Activated naive CD4-positive, alpha-beta T cell treated with anti-CD3 and anti-CD28 coated beads for 36 hours (primary cell): ENCODE measurements at regions of chr11 and their contacts with region 1.

Region 1: GRCh38 chr11:125111343-125112207 is at the start of gene TMEM218:
- DNase-seq: peak; percentile 98
- H3K4me3 Mint-ChIP-seq: peak within 1 kb of the TSS; percentile 84
- H3K27ac Mint-ChIP-seq: peak within 1 kb of the TSS; percentile 79
- H3K4me1 Mint-ChIP-seq: peaks cover 16% of the 10 kb centered on the region
- H3K27me3 Mint-ChIP-seq: no peaks in the 10 kb centered on the region
- total RNA-seq, gene TMEM218: 11.5 to 12.6 TPM

Region 2: DNA sequence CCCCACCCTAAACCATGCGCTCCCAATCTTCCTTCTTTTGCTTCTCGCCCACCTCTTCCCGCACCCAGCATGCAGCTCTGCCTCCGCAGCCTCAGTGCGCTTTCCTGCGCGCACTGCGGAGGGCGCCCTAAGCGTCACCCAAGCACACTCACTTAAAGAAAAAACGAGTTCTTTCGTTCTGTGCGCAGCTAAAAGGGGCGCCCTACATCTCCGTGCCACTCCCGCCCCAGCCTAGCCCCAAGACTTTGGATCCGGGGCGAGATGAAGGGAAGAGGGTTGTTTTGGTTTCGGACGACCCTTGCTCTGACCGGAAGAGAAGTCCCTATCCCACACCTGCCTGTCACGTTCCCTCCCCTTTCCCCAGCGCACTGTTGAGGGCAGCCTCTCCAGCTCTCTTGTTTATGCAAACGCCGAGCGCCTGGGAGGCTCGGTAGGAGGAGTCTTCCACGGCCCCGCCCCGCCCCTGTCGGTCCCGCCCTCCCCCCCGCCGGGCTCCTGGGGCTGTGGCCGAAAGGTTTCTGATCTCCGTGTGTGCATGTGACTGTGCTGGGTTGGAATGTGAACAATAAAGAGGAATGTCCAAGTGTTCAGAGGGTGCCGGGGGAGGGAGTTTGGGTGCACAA is 364.8 kb before region 1 on chr11:
- CTCF ChIA-PET with region 1: no interaction called
- intact Hi-C with region 1: loop called (anchors 1 kb)
- DNase-seq: peak; percentile 76
- H3K4me3 Mint-ChIP-seq: peak overlapping the region; percentile 83
- H3K27ac Mint-ChIP-seq: peak overlapping the region; percentile 75
- H3K4me1 Mint-ChIP-seq: peaks cover 14% of the 10 kb centered on the region
- H3K27me3 Mint-ChIP-seq: no peaks in the 10 kb centered on the region

Region 3: GRCh38 chr11:125062931-125063428 is 48.6 kb before region 1 on chr11 and contains the start of gene SLC37A2:
- CTCF ChIA-PET with region 1: no interaction called
- intact Hi-C with region 1: loop called (anchors 5 kb)
- DNase-seq: peak; percentile 61
- H3K4me3 Mint-ChIP-seq: peak within 1 kb of the TSS; percentile 61
- H3K27ac Mint-ChIP-seq: no peak within 1 kb of the TSS
- H3K4me1 Mint-ChIP-seq: peaks cover 6% of the 10 kb centered on the region
- H3K27me3 Mint-ChIP-seq: peaks cover 40% of the 10 kb centered on the region
- total RNA-seq, gene SLC37A2: 0.57 to 0.67 TPM

Region 4: DNA sequence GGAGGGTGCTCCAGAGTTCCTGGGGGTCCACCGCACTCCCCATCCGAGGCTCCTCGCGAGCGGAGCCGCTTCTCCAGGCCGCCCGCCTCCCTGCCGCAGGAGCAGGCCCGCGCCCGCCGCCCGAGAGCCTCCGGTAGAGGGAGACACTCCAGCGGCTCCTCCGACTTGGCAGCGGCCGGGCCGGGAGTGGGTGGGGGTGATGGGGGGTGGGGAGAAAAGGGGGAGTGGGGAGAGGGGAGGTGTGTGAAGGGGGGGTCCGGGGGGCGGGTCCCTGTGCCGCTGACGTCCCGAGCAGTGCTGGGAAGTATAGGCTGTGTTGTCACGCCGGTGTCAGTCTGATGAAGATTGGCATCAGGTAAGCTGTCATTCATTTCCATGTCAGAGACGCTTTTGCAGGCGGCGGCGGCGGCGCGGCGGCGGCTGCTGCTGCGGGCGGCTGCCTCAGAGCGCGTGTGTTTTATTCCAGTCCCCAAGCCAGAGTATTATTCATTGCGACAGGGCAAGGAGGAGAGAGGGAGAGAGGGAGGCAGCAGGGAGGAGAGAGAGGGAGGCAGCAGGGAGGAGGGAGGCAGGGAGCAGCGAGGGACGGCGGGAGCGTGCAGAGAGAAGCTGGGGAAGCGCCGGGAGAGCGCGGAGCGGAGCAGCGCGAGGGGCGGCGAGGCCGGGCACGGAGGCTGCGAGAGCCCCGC is 53.0 kb after region 1 on chr11 and contains the start of gene PKNOX2:
- CTCF ChIA-PET with region 1: no interaction called
- intact Hi-C with region 1: loop called (anchors 1 kb)
- DNase-seq: peak; percentile 74
- H3K4me3 Mint-ChIP-seq: peak within 1 kb of the TSS; percentile 85
- H3K27ac Mint-ChIP-seq: no peak within 1 kb of the TSS
- H3K4me1 Mint-ChIP-seq: peaks cover 15% of the 10 kb centered on the region
- H3K27me3 Mint-ChIP-seq: peaks cover 43% of the 10 kb centered on the region
- total RNA-seq, gene PKNOX2: not detected

Region 5: DNA sequence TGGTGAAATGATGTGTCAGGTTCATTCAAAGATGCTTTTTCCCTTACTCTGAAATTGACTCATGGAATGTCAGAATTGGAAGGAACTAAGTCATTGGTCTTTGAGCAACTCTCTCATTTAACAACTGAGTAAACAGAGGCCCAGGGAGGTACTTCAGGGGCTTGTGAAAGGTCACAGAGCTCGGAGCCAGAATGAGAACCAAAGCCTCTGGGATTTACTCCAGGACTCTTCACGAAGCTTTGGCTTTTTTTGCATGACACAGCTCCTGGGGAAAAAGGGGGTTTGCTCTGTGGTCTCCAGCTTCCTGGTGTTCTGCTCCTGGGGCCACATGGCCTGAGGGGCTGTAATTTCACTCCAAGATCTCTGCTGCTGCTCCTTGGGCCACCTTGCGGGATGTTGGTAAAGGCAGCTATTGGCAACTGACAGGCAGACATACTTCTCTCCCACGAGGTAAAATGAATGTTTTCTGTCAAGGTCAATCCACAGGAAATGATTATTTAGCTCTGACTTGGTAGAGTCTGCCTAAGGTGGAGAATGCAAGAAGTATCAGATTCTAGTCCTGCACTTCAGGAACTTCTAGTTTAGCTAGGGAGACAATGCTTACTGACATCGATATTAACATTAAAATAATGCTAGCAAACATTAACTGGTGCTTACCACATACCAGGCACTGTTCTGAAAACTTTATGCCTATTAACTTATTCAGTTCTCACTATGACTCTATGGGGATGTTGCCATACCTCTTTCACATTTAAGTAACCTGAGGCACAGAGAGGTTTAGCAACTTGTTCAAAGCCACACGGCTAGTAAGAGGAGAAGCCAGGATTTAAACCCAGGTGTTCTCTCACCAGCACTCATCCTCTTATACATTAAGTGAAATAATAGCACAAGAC is 69.1 kb after region 1 on chr11:
- CTCF ChIA-PET with region 1: no interaction called
- intact Hi-C with region 1: no loop called
- DNase-seq: no peak
- H3K4me3 Mint-ChIP-seq: no peak overlapping the region
- H3K27ac Mint-ChIP-seq: no peak overlapping the region
- H3K4me1 Mint-ChIP-seq: no peaks in the 10 kb centered on the region
- H3K27me3 Mint-ChIP-seq: peaks cover 33% of the 10 kb centered on the region

Region 6: GRCh38 chr11:125592305-125593112 is 480.9 kb after region 1 on chr11 and contains the start of gene STT3A:
- CTCF ChIA-PET with region 1: no interaction called
- intact Hi-C with region 1: loop called (anchors 1 kb)
- DNase-seq: peak; percentile 99
- H3K4me3 Mint-ChIP-seq: peak within 1 kb of the TSS; percentile 100
- H3K27ac Mint-ChIP-seq: peak within 1 kb of the TSS; percentile 92
- H3K4me1 Mint-ChIP-seq: peaks cover 51% of the 10 kb centered on the region
- H3K27me3 Mint-ChIP-seq: no peaks in the 10 kb centered on the region
- total RNA-seq, gene STT3A: 111 to 113 TPM